MCF 10A (cell line): ENCODE measurements at regions of chr2 and their contacts with region 1.

Region 1: DNA sequence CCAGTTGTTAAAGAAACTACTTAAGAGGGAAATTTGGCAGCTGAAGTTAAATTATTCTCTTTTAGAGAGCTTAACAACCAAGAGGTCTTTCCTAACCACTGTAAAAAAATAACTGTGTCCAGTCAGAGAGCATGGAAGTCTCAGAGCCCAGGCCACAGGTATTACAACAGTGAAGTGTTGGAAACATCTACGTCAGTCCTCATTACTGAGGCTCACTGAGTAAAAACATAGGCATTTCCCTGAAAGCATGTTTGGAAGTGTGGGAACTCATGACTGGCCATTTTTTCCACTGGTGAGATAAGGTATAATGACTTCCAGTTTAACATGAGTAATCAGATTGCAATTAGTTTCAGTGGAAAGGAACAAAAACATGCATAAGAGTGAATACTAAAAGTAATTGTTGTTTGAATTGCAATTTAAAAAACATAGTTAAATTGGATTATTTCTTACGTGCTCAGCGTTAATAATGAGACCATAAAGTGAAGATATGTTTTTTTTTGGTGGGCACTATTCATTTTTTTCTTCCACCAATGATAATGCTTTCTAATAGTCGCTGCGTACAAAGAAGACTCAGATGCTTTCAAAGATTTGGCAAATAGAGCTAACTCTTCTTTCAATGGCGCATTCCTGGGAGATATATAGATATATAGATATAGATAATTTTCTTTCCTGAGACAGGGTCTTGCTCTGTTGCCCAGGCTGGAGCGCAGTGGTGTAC is 60.8 kb downstream of the EFEMP1 start:
- DNase-seq: peak; percentile 98
- H3K4me3 Mint-ChIP-seq: peak overlapping the region; percentile 47
- H3K27ac Mint-ChIP-seq: peak overlapping the region; percentile 93
- H3K4me1 Mint-ChIP-seq: peaks cover 26% of the 10 kb centered on the region
- H3K27me3 Mint-ChIP-seq: no peaks in the 10 kb centered on the region
- CTCF ChIP-seq: no peak

Region 2: DNA sequence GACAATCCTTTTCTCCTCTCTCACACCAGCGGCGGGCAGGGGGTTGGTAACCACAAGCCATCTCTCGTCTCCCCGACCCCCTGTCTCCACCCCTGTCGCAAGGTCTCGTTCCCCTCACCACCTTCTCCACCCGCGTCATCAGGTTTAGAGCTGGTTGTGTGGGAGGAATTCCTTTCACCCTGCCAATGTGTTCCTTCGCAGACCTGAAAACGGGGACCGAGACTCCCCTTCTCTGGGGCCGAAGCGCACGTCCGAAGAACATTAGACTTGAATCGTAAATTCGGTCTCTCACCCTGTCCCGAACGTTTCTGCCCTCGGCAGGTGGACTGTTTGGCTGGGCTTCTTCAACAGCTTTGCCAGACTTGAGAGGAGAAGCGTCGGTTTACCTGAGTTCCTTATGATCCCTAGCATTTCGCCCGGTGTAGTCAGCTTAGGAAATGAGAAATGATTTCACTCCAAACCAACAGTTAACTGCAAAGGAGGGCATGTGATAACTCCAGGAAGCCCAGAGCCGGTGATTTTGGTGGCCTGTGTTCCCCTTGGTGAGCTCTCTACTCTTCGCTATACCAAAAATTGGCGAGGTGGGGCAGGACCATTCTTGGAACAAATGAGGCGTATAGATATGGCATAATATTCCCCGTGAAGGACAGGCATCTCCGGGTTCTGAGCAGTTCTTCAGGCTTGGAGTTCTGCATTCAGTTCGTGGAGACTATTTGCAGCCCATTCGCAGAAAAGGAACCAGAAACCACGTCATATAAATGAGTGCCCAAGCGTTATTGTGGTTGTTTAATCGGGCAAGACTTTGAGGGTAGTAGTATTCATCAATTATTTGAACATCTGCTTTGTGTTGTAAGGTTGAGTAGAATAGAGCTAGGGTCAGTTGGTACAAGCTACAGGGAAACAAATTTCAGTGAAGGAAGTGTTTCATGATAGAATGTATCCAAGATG is 342.6 kb before region 1 on chr2:
- CTCF ChIA-PET with region 1: no interaction called
- POLR2A ChIA-PET with region 1: no interaction called
- intact Hi-C with region 1: no loop called
- DNase-seq: peak; percentile 47
- H3K4me3 Mint-ChIP-seq: peak overlapping the region; percentile 96
- H3K27ac Mint-ChIP-seq: peak overlapping the region; percentile 97
- H3K4me1 Mint-ChIP-seq: peaks cover 13% of the 10 kb centered on the region
- H3K27me3 Mint-ChIP-seq: no peaks in the 10 kb centered on the region
- CTCF ChIP-seq: no peak

Region 3: GRCh38 chr2:55565613-55566012 is 297.2 kb before region 1 on chr2:
- CTCF ChIA-PET with region 1: no interaction called
- POLR2A ChIA-PET with region 1: no interaction called
- intact Hi-C with region 1: no loop called
- DNase-seq: no peak
- H3K4me3 Mint-ChIP-seq: no peak overlapping the region
- H3K27ac Mint-ChIP-seq: no peak overlapping the region
- H3K4me1 Mint-ChIP-seq: peaks cover 6% of the 10 kb centered on the region
- H3K27me3 Mint-ChIP-seq: no peaks in the 10 kb centered on the region
- CTCF ChIP-seq: no peak

Region 4: DNA sequence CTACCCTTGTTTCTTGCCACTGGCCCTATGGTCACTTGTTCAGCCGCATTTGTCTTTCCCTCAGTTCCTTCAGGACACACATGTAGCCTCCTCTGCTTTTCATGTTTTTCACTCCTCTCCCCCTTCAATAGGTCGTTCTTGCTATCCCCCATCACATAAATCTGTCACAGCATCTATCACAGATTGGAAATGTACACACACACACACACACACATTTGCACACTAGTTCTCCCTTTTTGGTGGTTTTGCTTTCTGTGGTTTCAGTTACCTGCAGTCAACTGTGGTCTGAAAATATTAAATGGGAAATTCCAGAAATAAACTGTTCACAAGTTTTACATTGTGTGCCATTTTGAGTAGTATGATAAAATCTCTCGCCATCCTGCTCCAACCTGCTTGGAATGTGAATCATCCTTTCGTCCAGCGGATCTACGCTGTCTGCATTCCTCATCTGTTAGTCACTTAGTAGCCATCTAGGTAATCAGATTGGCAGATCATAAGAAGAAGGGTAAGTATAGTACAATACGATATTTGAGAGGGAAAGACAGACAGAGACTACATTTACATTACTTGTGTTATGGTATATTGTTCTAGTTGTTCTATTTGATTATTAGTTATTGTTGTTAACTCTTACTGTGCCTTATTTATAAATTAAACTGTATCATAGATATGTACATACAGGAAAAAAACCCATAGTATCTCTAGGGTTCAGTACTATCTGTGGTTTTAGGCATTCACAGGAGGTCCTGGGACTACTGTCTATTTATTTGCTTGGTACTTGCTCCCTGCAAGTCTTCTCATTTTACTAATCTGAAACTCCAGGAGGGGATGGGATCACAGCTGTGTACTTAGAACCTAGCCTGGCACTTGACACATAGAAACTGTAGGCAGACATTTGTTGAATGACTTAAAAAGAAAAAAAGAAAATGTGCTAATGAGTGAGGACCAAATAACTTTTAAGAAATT is 83.1 kb before region 1 on chr2:
- CTCF ChIA-PET with region 1: interaction called, 8 read pairs
- POLR2A ChIA-PET with region 1: interaction called, 28 read pairs
- intact Hi-C with region 1: loop called (anchors 2 kb)
- DNase-seq: peak; percentile 90
- H3K4me3 Mint-ChIP-seq: peak overlapping the region; percentile 41
- H3K27ac Mint-ChIP-seq: peak overlapping the region; percentile 97
- H3K4me1 Mint-ChIP-seq: peaks cover 36% of the 10 kb centered on the region
- H3K27me3 Mint-ChIP-seq: no peaks in the 10 kb centered on the region
- CTCF ChIP-seq: no peak

Region 5: DNA sequence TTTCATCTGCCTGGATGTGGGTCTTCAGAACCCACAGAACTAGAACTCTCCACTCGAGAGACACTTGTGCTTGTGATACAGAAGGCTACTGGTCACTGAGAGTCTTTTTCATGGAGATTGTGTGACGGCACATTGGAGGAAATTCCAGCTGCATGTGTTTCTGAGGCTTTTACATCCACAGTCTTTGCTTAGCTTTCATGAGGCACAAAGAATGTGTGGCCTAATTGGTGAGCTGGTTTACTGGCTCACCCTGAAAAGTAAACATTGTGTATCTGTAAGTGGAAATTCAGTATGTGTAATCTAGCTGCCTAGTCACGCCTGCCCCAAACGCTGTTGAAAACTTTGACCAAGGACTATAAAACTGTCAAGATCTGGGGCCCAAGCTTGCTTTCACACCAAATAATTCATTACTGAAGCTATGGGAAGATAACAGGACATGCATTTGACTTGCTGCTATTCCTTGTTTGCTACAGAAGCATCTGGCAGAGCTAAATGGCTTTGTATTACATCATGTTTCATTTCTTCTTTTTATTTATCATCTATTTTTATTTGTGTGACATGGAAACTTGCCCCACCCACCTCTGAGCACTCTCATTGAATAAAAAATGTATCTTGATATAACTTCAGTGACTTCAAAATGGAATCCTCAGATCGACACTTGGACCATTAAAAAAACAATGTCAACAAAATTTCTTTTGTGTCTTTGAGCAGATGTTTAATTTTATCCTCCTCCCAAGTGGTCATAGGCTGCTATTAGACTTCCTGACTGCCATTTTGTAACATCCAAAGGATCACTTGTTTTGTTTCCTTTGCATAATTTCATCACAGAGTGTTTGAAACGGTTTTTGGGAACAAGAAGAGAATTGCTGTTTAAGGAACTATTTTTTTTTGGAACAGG is 19.5 kb before region 1 on chr2:
- CTCF ChIA-PET with region 1: no interaction called
- POLR2A ChIA-PET with region 1: interaction called, 62 read pairs
- intact Hi-C with region 1: loop called (anchors 1 kb)
- DNase-seq: peak; percentile 64
- H3K4me3 Mint-ChIP-seq: no peak overlapping the region
- H3K27ac Mint-ChIP-seq: no peak overlapping the region
- H3K4me1 Mint-ChIP-seq: no peaks in the 10 kb centered on the region
- H3K27me3 Mint-ChIP-seq: no peaks in the 10 kb centered on the region
- CTCF ChIP-seq: no peak

Region 6: DNA sequence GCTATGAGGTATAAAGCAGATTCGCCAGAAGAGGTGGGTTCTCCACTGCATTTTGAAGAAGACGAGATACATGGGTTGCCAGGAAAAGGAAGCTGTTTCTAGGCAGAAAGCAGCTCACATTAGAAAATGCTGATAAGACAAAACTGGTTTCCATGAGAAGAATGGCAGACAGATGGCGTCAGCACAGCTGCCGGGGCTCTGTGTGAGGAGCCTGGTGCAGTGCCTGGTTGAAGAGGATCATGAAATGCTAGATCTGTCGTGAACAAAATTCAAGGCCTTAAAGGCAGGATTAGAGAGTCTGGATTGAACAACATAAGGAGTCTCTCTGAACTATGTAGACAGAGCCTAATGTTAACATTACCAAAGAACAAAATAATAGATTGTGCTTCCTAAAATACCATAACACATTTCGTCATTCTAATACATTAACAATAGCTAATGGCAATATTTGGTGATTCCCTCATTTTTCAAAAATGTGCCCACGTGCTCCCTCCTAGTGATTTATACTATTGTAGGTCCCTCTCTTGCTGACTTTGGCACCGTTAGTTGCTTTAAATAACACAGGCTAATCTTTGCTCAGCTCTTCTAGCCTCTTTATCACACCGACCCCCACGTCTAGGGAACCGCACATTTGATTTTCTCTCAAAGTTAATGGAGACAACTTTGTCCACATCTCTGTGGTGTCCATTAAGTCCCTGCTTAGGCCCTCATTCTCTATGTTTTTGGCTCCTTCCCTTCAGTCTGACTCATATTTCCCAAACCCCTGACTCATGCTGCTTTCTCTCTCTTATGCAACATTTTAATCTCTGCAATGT is 22.5 kb after region 1 on chr2:
- CTCF ChIA-PET with region 1: interaction called, 4 read pairs
- POLR2A ChIA-PET with region 1: interaction called, 19 read pairs
- intact Hi-C with region 1: loop called (anchors 1 kb)
- DNase-seq: peak; percentile 91
- H3K4me3 Mint-ChIP-seq: no peak overlapping the region
- H3K27ac Mint-ChIP-seq: peak overlapping the region; percentile 97
- H3K4me1 Mint-ChIP-seq: peaks cover 64% of the 10 kb centered on the region
- H3K27me3 Mint-ChIP-seq: no peaks in the 10 kb centered on the region
- CTCF ChIP-seq: no peak

Region 7: GRCh38 chr2:55954306-55955035 is 91.6 kb after region 1 on chr2:
- CTCF ChIA-PET with region 1: interaction called, 3 read pairs
- POLR2A ChIA-PET with region 1: interaction called, 10 read pairs
- intact Hi-C with region 1: loop called (anchors 1 kb)
- DNase-seq: peak; percentile 69
- H3K4me3 Mint-ChIP-seq: no peak overlapping the region
- H3K27ac Mint-ChIP-seq: no peak overlapping the region
- H3K4me1 Mint-ChIP-seq: peaks cover 20% of the 10 kb centered on the region
- H3K27me3 Mint-ChIP-seq: no peaks in the 10 kb centered on the region
- CTCF ChIP-seq: no peak

Region 8: GRCh38 chr2:56047136-56047535 is 184.3 kb after region 1 on chr2:
- CTCF ChIA-PET with region 1: no interaction called
- POLR2A ChIA-PET with region 1: no interaction called
- intact Hi-C with region 1: no loop called
- DNase-seq: no peak
- H3K4me3 Mint-ChIP-seq: no peak overlapping the region
- H3K27ac Mint-ChIP-seq: no peak overlapping the region
- H3K4me1 Mint-ChIP-seq: no peaks in the 10 kb centered on the region
- H3K27me3 Mint-ChIP-seq: no peaks in the 10 kb centered on the region
- CTCF ChIP-seq: no peak